ENCODE measurements at regions of chr9 and their contacts with region 1.

Region 1: DNA sequence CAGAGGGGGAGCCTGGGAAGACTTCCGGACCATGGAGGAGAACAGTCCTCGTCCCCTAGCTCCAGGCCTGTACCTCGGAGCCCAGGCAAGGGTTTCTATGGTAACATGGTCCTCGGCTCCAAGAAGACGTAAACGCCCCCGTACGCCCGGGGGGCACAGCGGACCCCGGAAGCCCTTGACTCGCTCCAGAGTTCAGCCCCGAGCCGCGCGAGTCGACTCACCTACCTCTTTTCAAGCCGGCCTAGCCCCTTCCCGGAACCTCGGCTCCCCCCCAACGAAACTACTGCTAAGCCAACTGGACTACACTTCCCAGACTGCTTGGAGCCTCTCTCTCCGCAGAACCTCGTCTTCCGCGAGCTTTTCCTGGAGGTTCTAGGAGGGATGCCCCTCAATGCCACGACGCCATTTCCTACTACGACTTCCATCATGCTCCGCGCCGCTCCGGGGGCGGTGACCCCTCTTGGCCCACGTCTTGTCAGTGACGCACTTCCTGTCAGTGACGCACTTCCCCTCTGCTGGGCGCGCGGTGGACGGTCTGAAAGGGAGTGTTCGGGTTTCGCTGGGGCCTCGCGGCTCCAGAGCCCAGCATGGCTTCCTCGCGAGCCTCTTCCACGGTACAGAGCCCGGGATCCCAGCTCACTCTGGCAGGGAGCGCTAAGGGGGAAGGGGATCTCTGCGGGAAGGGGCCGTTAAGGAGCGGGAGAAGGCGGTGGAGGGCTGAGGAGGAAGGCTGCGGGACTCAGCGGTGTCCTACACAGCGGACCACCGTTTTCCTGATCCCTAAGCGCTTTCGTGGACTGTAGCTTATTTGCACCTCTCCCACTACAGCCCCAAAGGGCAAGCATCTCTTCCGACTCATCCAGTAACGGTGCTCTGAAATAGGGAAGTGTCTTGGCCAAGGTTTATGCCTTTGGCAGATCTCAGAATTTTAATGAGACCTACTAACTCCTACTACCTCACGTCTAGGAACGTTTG is at the starts of genes CDC26 and PRPF4:
- DNase-seq: peak; percentile 97 to 98 (median 97)
- ATAC-seq: peak; percentile 98 to 99 (median 98)
- H3K4me3 ChIP-seq: peak within 1 kb of the TSS; percentile 48 to 93 (median 76)
- H3K27ac ChIP-seq: peak within 1 kb of the TSS; percentile 69 to 96 (median 94)
- H3K4me1 ChIP-seq: peaks cover 4 to 41% (median 19%) of the 10 kb centered on the region in 12 donors
- H3K27me3 ChIP-seq: no peaks in the 10 kb centered on the region
- CTCF ChIP-seq: peak in 1 of 12 donors; percentile 5
- POLR2A ChIP-seq: peak; percentile 60 to 87
- total RNA-seq, gene CDC26: 22.3 to 39.4 (median 34.4) TPM
- total RNA-seq, gene PRPF4: 10.4 to 15.0 (median 13.8) TPM

Region 2: DNA sequence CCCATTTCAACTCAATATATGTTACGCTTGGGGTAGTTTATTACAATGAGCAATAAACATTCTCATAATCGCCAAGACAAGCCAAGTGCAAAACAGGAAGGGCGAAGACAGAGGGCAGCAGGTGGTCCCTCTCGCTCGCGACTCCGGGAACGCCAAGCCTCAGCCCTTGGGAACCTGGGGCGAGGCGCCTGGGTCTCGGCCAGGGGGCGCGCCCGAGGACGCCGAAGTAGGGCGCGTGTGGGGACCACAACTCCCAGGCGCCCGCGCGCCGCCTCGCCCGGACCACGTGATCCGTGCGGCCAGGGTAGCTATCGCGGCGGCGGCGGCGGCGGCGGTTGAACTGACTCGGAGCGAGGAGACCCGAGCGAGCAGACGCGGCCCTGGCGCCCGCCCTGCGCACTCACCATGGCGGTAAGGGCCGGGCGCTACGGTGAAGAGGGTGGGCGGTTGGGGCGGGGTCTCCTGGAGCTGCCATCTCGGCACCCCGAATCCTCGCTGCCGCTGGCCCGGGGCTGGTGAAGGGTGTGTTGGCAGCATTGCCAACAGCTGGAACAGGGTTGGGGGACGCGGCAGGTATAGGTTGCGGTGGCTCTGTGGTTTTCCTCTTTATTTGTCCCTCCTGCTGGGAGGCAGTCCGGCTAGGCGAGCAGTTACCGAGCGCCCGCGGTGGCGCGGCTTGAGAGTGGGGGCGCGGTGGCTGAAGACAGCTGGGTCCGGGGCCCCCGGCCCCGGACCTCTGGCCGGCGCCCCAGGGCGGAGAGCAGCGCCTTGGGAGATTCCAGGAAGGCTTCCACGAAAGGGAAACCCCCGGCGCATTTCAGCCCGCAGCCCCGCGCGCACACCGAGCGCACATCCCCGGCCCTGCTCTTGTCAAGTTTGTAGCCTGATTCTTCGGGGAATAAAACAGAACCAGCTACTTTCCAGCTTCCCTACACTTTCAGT is 124.5 kb before region 1 on chr9 and contains the start of gene SLC31A2:
- intact Hi-C with region 1: loop called in 1 of 10 experiments (anchors 10 kb)
- DNase-seq: peak; percentile 90 to 96 (median 91)
- ATAC-seq: peak; percentile 90 to 97 (median 95)
- H3K4me3 ChIP-seq: peak within 1 kb of the TSS; percentile 72 to 98 (median 94)
- H3K27ac ChIP-seq: peak within 1 kb of the TSS; percentile 48 to 91 (median 80)
- H3K4me1 ChIP-seq: peaks cover 0 to 59% (median 14%) of the 10 kb centered on the region in 12 donors
- H3K27me3 ChIP-seq: no peaks in the 10 kb centered on the region
- CTCF ChIP-seq: peak in 10 of 12 donors; percentile 32 to 67 (median 44)
- POLR2A ChIP-seq: peak; percentile 14 to 82
- total RNA-seq, gene SLC31A2: 5.2 to 26.4 (median 13.8) TPM

Region 3: GRCh38 chr9:113221003-113221799 is 54.2 kb before region 1 on chr9 and contains the starts of genes FKBP15 and SLC31A1:
- intact Hi-C with region 1: loop called in 6 of 10 experiments (anchors 2 to 10 kb)
- DNase-seq: peak; percentile 98 to 99 (median 98)
- ATAC-seq: peak; percentile 99 to 100 (median 99)
- H3K4me3 ChIP-seq: peak within 1 kb of the TSS; percentile 66 to 95 (median 82)
- H3K27ac ChIP-seq: peak within 1 kb of the TSS; percentile 68 to 92 (median 88)
- H3K4me1 ChIP-seq: peaks cover 0 to 73% (median 41%) of the 10 kb centered on the region in 12 donors
- H3K27me3 ChIP-seq: no peaks in the 10 kb centered on the region
- CTCF ChIP-seq: peak in 1 of 12 donors; percentile 8
- POLR2A ChIP-seq: peak in 1 of 2 donors; percentile 77
- total RNA-seq, gene FKBP15: 15.8 to 45.5 (median 18.7) TPM
- total RNA-seq, gene SLC31A1: 7.9 to 18.2 (median 10.7) TPM

Region 4: GRCh38 chr9:113331780-113332179 is 56.3 kb after region 1 on chr9:
- intact Hi-C with region 1: no loop called
- DNase-seq: no peak
- ATAC-seq: no peak
- H3K4me3 ChIP-seq: no peak overlapping the region
- H3K27ac ChIP-seq: no peak overlapping the region
- H3K4me1 ChIP-seq: peaks cover 0 to 14% (median 0%) of the 10 kb centered on the region in 12 donors
- H3K27me3 ChIP-seq: no peaks in the 10 kb centered on the region
- CTCF ChIP-seq: no peak
- POLR2A ChIP-seq: no peak

Region 5: GRCh38 chr9:113401027-113401792 is 125.8 kb after region 1 on chr9 and contains the start of gene ALAD:
- intact Hi-C with region 1: loop called in 5 of 10 experiments (anchors 5 to 10 kb)
- DNase-seq: peak; percentile 99 to 100 (median 100)
- ATAC-seq: peak; percentile 98 to 99 (median 99)
- H3K4me3 ChIP-seq: peak within 1 kb of the TSS; percentile 70 to 94 (median 88)
- H3K27ac ChIP-seq: peak within 1 kb of the TSS; percentile 48 to 88 (median 74)
- H3K4me1 ChIP-seq: peaks cover 0 to 49% (median 23%) of the 10 kb centered on the region in 12 donors
- H3K27me3 ChIP-seq: no peaks in the 10 kb centered on the region
- CTCF ChIP-seq: peak; percentile 93 to 100 (median 97)
- POLR2A ChIP-seq: peak in 1 of 2 donors; percentile 83
- total RNA-seq, gene ALAD: 39.8 to 153 (median 91.8) TPM

Region 6: GRCh38 chr9:113578882-113579282 is 303.4 kb after region 1 on chr9:
- intact Hi-C with region 1: loop called in 2 of 10 experiments (anchors 10 kb)
- DNase-seq: peak in 2 of 5 donors; percentile 77 to 80
- ATAC-seq: peak in 2 of 4 donors; percentile 5 to 11
- H3K4me3 ChIP-seq: no peak overlapping the region
- H3K27ac ChIP-seq: peak overlapping the region in 11 of 12 donors; percentile 78 to 99 (median 85)
- H3K4me1 ChIP-seq: peaks cover 19 to 95% (median 74%) of the 10 kb centered on the region in 12 donors
- H3K27me3 ChIP-seq: no peaks in the 10 kb centered on the region
- CTCF ChIP-seq: no peak
- POLR2A ChIP-seq: no peak

Region 7: GRCh38 chr9:113657703-113658544 is 382.5 kb after region 1 on chr9:
- intact Hi-C with region 1: loop called in 5 of 10 experiments (anchors 5 to 10 kb)
- DNase-seq: peak; percentile 87 to 90 (median 88)
- ATAC-seq: peak; percentile 54 to 83 (median 74)
- H3K4me3 ChIP-seq: no peak overlapping the region
- H3K27ac ChIP-seq: peak overlapping the region in 5 of 12 donors; percentile 9 to 56 (median 28)
- H3K4me1 ChIP-seq: peaks cover 8 to 44% (median 30%) of the 10 kb centered on the region in 12 donors
- H3K27me3 ChIP-seq: no peaks in the 10 kb centered on the region
- CTCF ChIP-seq: peak; percentile 93 to 98 (median 97)
- POLR2A ChIP-seq: no peak